ENCODE measurements at regions of chr18 and their contacts with region 1.

Region 1: GRCh38 chr18:12934454-12935071 is 13.2 kb upstream of the SEH1L start:
- H3K4me3 ChIP-seq: no peak overlapping the region
- H3K27ac ChIP-seq: no peak overlapping the region
- H3K4me1 ChIP-seq: no peaks in the 10 kb centered on the region
- CTCF ChIP-seq: peak; percentile 91

Region 2: DNA sequence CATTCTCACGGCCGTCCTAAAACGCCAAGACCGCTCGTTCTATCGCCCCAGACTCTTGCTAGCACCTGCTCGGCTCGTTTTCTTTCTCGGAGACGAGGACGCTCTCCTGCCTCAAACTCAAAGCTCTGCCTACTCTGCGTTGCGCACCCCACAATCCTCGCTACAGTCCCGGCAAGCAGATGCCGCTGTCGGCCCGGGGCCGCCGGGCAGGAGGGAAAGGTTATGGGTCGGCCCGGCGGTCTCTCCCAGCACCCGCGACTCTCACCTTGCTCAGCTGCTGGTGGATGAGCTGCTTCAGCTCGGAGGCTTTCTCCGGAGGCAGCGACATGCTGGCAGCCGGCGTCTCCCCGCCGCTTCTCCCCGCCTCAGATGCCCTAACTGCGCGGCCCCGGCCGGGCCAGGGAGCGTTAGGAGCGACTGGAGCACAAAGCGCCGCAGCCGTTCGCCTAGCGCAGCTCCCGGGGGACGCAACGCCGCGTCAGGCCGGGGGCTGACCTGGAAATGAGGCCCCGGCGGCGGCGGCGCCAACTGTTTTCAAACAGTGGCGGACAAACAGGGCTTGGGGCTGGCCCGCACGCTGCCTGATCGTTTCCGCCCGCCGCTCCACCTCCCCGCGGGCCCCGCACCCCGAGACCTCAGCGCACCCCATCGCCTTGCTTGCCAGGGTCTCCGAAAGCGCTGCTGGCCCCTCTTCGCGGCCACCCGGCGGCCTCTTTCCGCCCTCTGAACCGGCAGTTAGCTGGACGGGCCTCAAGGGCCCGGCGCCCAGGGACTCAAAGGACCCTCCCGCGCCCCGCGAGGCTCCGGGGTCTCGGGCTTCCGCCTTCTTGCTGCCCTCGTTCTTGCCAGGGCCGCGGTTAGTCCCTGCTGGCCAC is 232.1 kb before region 1 on chr18 and contains the starts of genes CEP76 and PSMG2:
- CTCF ChIA-PET with region 1: interaction called, 12 read pairs
- POLR2A ChIA-PET with region 1: interaction called, 7 read pairs
- H3K4me3 ChIP-seq: peak within 1 kb of the TSS; percentile 87
- H3K27ac ChIP-seq: peak within 1 kb of the TSS; percentile 99
- H3K4me1 ChIP-seq: peaks cover 6% of the 10 kb centered on the region; the same call in 1 of the 2 replicates
- CTCF ChIP-seq: peak; percentile 47

Region 3: GRCh38 chr18:12744103-12744502 is 190.5 kb before region 1 on chr18:
- CTCF ChIA-PET with region 1: interaction called, 70 read pairs
- POLR2A ChIA-PET with region 1: no interaction called
- H3K4me3 ChIP-seq: no peak overlapping the region
- H3K27ac ChIP-seq: no peak overlapping the region
- H3K4me1 ChIP-seq: peaks cover 6% of the 10 kb centered on the region; the same call in 1 of the 2 replicates
- CTCF ChIP-seq: peak; percentile 39; the same call in 1 of the 2 replicates

Region 4: DNA sequence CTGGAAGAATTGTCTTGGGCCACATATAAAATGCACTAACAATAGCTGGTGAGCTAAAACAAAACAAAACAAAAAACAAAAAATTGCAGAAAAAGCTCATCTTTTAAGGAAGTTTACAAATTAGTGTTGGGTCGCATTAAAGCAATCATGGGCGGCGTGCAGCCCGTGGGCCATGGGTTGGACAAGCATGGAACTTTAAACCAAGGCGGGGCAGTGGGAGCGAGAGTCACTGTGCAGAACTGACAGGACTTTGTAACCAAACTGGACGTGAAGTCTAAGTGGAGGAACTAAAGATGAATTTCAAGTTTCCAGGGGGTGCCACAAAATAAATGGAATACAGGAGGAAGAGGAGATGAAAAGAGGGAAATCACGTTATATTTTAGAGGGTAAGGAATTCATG is 151.0 kb before region 1 on chr18:
- CTCF ChIA-PET with region 1: no interaction called
- POLR2A ChIA-PET with region 1: no interaction called
- H3K4me3 ChIP-seq: no peak overlapping the region
- H3K27ac ChIP-seq: no peak overlapping the region
- H3K4me1 ChIP-seq: no peaks in the 10 kb centered on the region
- CTCF ChIP-seq: no peak

Region 5: DNA sequence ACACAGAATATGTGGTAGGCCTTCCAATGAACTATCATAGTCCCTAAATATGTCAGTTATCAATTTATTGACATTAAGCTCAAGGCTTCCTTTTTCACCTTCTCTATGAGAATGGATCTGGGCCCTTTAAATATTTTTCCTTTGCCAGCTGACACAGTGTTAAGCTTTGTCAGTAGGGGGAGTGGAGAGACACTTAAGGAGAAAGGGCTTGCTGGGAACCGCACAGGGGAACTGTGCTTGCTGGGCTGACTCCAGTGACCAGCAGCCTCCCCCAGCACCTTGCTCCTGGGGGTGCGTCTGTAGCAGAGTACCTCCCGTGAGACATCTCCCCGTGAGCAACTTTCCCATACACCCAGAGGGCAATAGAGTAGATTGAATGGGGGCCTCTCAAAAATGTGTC is 44.1 kb before region 1 on chr18:
- CTCF ChIA-PET with region 1: interaction called, 15 read pairs
- POLR2A ChIA-PET with region 1: interaction called, 3 read pairs
- H3K4me3 ChIP-seq: no peak overlapping the region
- H3K27ac ChIP-seq: no peak overlapping the region
- H3K4me1 ChIP-seq: no peaks in the 10 kb centered on the region
- CTCF ChIP-seq: no peak

Region 6: DNA sequence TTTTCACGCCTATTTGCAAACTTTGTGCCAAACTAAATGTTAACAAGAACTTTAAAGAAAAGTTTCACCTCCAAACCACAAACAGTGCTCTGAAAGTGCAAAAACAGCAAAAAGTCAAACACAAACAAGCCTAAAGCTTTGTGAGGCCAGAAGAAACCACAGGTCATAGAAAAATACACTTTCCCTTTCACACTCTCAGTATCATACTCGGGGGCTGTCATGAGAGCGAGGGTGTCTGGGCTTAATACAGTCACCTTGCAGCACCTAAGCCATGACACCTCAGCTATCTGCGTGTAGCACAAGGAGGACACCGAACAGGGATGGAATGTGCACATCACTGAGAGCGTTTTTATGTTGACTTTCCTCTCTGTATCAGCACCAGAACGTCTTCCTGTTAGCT is 13.4 kb before region 1 on chr18:
- CTCF ChIA-PET with region 1: interaction called, 15 read pairs
- POLR2A ChIA-PET with region 1: no interaction called
- H3K4me3 ChIP-seq: no peak overlapping the region
- H3K27ac ChIP-seq: no peak overlapping the region
- H3K4me1 ChIP-seq: no peaks in the 10 kb centered on the region
- CTCF ChIP-seq: no peak

Region 7: GRCh38 chr18:13103366-13103765 is 168.8 kb after region 1 on chr18:
- CTCF ChIA-PET with region 1: no interaction called
- POLR2A ChIA-PET with region 1: no interaction called
- H3K4me3 ChIP-seq: no peak overlapping the region
- H3K27ac ChIP-seq: no peak overlapping the region
- H3K4me1 ChIP-seq: no peaks in the 10 kb centered on the region
- CTCF ChIP-seq: no peak

Region 8: GRCh38 chr18:13464432-13465123 is 530.0 kb after region 1 on chr18:
- CTCF ChIA-PET with region 1: no interaction called
- POLR2A ChIA-PET with region 1: no interaction called
- H3K4me3 ChIP-seq: no peak overlapping the region
- H3K27ac ChIP-seq: no peak overlapping the region
- H3K4me1 ChIP-seq: no peaks in the 10 kb centered on the region
- CTCF ChIP-seq: no peak